ENCODE measurements at regions of chr10 and their contacts with region 1.

Region 1: GRCh38 chr10:71812016-71812912 is 38.8 kb downstream of the PSAP start:
- DNase-seq: peak; percentile 27
- ATAC-seq: peak; percentile 88
- H3K4me3 ChIP-seq: no peak overlapping the region
- H3K27ac ChIP-seq: no peak overlapping the region
- H3K4me1 ChIP-seq: no peaks in the 10 kb centered on the region
- H3K27me3 ChIP-seq: no peaks in the 10 kb centered on the region
- CTCF ChIP-seq: peak; percentile 95
- EP300 ChIP-seq: no peak
- POLR2A ChIP-seq: peak in 1 of 2 experiments; percentile 12; a peak in 1 of 4 replicates
- RAD21 ChIP-seq: peak; percentile 80

Region 2: GRCh38 chr10:71696628-71697326 is 115.5 kb before region 1 on chr10:
- CTCF ChIA-PET with region 1: interaction called, 4 read pairs
- POLR2A ChIA-PET with region 1: no interaction called
- in situ Hi-C with region 1: no loop called
- intact Hi-C with region 1: loop called (anchors 1 kb)
- DNase-seq: peak; percentile 33
- ATAC-seq: peak; percentile 88
- H3K4me3 ChIP-seq: no peak overlapping the region
- H3K27ac ChIP-seq: no peak overlapping the region
- H3K4me1 ChIP-seq: peaks cover 17% of the 10 kb centered on the region
- H3K27me3 ChIP-seq: peaks cover 0 to 37% of the 10 kb centered on the region in 2 experiments; a peak in 3 of 5 replicates
- CTCF ChIP-seq: peak; percentile 83
- EP300 ChIP-seq: no peak
- POLR2A ChIP-seq: no peak
- RAD21 ChIP-seq: peak; percentile 60

Region 3: DNA sequence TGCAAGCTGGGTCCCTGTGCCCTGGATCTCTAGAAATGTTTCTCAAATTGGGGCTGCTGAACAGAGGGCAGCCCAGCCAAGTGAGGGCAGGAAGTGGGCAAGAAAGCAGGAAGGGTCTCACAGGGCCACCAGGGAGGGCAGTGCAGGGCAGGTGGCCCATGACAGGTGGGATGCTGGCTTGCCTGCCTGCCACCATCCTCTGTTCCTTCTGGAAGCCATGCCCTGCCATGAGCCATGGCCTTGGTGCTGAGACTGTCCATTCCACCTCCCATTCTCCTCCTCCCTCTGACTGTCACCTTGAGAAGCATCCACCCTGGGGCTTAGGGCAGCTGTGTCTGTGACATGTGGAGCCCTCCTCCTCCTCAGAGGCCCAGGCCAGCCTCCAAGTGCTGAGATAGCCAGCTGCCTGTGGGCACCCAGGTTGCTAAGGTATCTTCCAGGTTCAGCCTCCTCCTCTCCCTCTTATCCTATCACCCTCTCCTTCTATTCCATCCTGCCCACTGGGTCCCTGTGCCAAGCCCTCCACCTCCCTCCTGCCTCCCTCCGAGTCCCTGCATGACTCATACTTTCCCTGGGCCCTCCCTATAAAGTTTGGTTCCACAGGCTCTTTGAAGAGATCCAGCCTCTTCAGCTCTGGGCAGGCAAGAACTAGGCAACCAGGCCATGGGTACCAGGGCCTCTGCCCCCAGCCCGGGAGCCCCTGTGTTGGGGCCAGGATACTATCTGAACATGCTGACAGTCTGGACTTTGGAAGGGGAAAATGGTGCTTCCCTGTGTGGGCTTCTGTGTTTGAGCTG is 40.2 kb before region 1 on chr10:
- CTCF ChIA-PET with region 1: no interaction called
- POLR2A ChIA-PET with region 1: no interaction called
- in situ Hi-C with region 1: no loop called
- intact Hi-C with region 1: loop called (anchors 5 kb)
- DNase-seq: no peak
- ATAC-seq: no peak
- H3K4me3 ChIP-seq: no peak overlapping the region
- H3K27ac ChIP-seq: no peak overlapping the region
- H3K4me1 ChIP-seq: peaks cover 24% of the 10 kb centered on the region
- H3K27me3 ChIP-seq: peaks cover 3 to 40% of the 10 kb centered on the region in 2 experiments; a peak in 4 of 5 replicates
- CTCF ChIP-seq: no peak
- EP300 ChIP-seq: no peak
- POLR2A ChIP-seq: no peak
- RAD21 ChIP-seq: no peak

Region 4: DNA sequence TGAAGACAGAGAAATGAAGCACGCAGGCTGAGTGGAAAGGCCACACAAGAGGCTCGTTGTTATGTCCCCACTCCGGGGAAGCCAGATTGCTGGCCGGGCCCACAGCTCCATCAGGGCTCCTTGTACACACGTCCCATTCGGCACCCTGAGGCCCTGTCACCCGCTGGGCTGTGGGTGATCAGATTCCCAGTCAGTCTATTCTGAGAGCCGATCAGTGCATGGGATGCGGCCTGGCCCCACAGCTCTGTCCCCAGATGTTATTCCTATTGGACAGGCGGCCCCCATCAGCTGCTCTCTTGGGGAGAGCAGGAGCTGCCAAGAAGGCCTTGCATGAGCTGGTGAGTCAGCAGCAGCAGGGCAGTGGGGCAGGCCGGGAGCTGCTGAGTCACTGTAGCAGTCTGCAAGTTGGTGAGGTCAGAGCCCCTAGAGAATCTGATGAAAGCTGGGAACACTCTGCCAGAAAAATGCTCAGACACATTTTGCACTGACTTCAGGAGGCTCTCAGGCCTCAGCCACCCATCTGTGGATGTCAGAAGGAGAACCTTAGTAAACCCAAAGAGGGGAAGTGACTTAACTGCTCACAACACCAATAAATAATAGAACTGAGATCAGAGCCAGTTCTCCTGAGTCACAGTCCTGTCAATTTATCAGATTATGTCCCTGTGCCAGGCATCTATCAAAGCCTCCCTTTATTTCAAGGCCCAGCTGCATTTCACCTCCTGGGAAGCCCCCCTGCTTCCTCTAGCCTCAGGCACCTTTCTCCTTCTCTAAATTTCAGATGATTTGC is 48.2 kb after region 1 on chr10:
- CTCF ChIA-PET with region 1: no interaction called
- POLR2A ChIA-PET with region 1: no interaction called
- in situ Hi-C with region 1: no loop called
- intact Hi-C with region 1: no loop called
- DNase-seq: peak; percentile 85
- ATAC-seq: peak; percentile 97
- H3K4me3 ChIP-seq: peak overlapping the region; percentile 24 to 62 (median 45); a peak in 4 of 6 replicates
- H3K27ac ChIP-seq: peak overlapping the region; percentile 35
- H3K4me1 ChIP-seq: peaks cover 33% of the 10 kb centered on the region
- H3K27me3 ChIP-seq: peaks cover 0 to 3% of the 10 kb centered on the region in 2 experiments; a peak in 2 of 5 replicates
- CTCF ChIP-seq: no peak
- EP300 ChIP-seq: peak in 1 of 2 experiments; percentile 31; a peak in 1 of 4 replicates
- POLR2A ChIP-seq: peak in 1 of 2 experiments; percentile 48; a peak in 1 of 4 replicates
- RAD21 ChIP-seq: no peak

Region 5: GRCh38 chr10:71998119-71998839 is 186.0 kb after region 1 on chr10:
- CTCF ChIA-PET with region 1: no interaction called
- POLR2A ChIA-PET with region 1: no interaction called
- in situ Hi-C with region 1: no loop called
- intact Hi-C with region 1: no loop called
- DNase-seq: no peak
- ATAC-seq: peak; percentile 42
- H3K4me3 ChIP-seq: no peak overlapping the region
- H3K27ac ChIP-seq: peak overlapping the region; percentile 41
- H3K4me1 ChIP-seq: peaks cover 38% of the 10 kb centered on the region
- H3K27me3 ChIP-seq: no peaks in the 10 kb centered on the region
- CTCF ChIP-seq: no peak
- EP300 ChIP-seq: no peak
- POLR2A ChIP-seq: no peak
- RAD21 ChIP-seq: no peak

Measured in HepG2 (cell line).